ENCODE measurements at regions of chr5 and their contacts with region 1.

Region 1: DNA sequence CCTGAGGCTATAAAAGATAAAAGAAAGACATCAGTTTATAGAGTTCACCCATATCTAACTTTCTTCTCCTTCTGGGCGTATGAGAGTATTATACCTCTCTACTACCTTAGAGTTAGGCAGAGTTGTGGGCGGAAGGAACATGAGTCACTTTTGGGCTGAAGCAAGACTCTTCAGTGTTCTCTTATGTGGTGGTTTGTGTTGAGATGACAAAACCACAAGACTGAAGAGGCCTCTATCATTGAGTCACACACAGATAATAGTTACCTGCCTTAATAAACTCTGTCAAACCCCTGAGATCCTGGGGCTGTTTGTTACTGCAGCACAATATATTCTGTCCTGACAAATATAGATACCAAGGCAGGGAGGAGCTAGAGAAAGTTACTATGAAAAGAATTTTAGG is 184.2 kb downstream of the EFNA5 start:
- DNase-seq: peak; percentile 79
- H3K4me3 Mint-ChIP-seq: no peak overlapping the region
- H3K27ac Mint-ChIP-seq: no peak overlapping the region
- H3K4me1 Mint-ChIP-seq: peaks cover 20% of the 10 kb centered on the region
- H3K27me3 Mint-ChIP-seq: peaks cover 10% of the 10 kb centered on the region

Region 2: GRCh38 chr5:107389130-107389774 is 97.2 kb before region 1 on chr5:
- intact Hi-C with region 1: loop called (anchors 5 kb)
- DNase-seq: peak; percentile 78
- H3K4me3 Mint-ChIP-seq: peak overlapping the region; percentile 33
- H3K27ac Mint-ChIP-seq: peak overlapping the region; percentile 85
- H3K4me1 Mint-ChIP-seq: peaks cover 20% of the 10 kb centered on the region
- H3K27me3 Mint-ChIP-seq: peaks cover 4% of the 10 kb centered on the region

Region 3: GRCh38 chr5:107464416-107464815 is 22.1 kb before region 1 on chr5:
- intact Hi-C with region 1: loop called (anchors 2 kb)
- DNase-seq: no peak
- H3K4me3 Mint-ChIP-seq: no peak overlapping the region
- H3K27ac Mint-ChIP-seq: peak overlapping the region; percentile 71
- H3K4me1 Mint-ChIP-seq: peaks cover 6% of the 10 kb centered on the region
- H3K27me3 Mint-ChIP-seq: peaks cover 11% of the 10 kb centered on the region

Region 4: GRCh38 chr5:107855171-107855570 is 368.7 kb after region 1 on chr5:
- intact Hi-C with region 1: no loop called
- DNase-seq: peak; percentile 47
- H3K4me3 Mint-ChIP-seq: no peak overlapping the region
- H3K27ac Mint-ChIP-seq: no peak overlapping the region
- H3K4me1 Mint-ChIP-seq: no peaks in the 10 kb centered on the region
- H3K27me3 Mint-ChIP-seq: peaks cover 8% of the 10 kb centered on the region

Measured in activated CD4-positive, alpha-beta T cell treated with anti-CD3 and anti-CD28 coated beads, Interleukin-2, amount 10 ng/mL, durations not matched to agents 24 days and 14 days (primary cell).